ENCODE measurements at regions of chr2 and their contacts with region 1.

Region 1: DNA sequence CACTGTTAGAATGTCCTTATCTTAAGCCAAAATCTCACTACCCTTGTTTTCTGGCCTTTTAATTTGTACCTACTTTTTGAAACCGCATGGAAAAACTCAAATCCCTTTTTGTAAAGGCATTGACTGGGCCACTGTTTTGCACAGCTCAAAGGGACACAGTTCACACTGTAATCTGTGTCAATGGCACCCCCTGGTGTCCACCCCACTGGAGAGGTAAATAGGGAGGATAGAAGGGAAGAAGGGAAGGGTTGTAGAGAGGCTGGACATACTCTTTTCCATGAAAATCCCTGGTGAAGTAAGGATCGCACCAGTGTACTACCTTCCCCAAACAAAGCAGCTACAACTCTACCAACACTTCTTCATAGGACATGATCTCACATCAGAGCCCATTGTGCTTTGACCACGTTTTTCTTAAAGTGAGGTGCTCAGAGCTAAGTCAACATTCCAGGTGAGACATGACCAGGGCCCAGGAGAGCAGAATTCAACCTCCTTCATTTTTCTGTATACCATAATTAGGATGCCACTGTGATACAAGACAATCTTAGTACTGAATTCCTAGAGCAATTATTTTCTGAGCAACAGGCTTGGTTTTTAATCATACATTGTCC is 92.4 kb upstream of the RMDN2 start:
- DNase-seq: peak; percentile 86
- ATAC-seq: peak; percentile 67
- H3K4me3 ChIP-seq: no peak overlapping the region
- H3K27ac ChIP-seq: peak overlapping the region; percentile 39; the same call in 1 of the 2 replicates
- H3K4me1 ChIP-seq: peaks cover 34% of the 10 kb centered on the region
- H3K27me3 ChIP-seq: no peaks in the 10 kb centered on the region
- CTCF ChIP-seq: peak; percentile 88
- POLR2A ChIP-seq: no peak
- RAD21 ChIP-seq: peak; percentile 97

Region 2: GRCh38 chr2:37414470-37414949 is 418.2 kb before region 1 on chr2:
- CTCF ChIA-PET with region 1: interaction called, 20 read pairs
- POLR2A ChIA-PET with region 1: no interaction called
- dilution Hi-C with region 1: no loop called
- in situ Hi-C with region 1: loop called (anchors 5 kb)
- intact Hi-C with region 1: loop called (anchors 1 kb)
- DNase-seq: peak; percentile 81
- ATAC-seq: peak; percentile 84
- H3K4me3 ChIP-seq: no peak overlapping the region
- H3K27ac ChIP-seq: no peak overlapping the region
- H3K4me1 ChIP-seq: peaks cover 11% of the 10 kb centered on the region
- H3K27me3 ChIP-seq: no peaks in the 10 kb centered on the region
- CTCF ChIP-seq: peak; percentile 96
- POLR2A ChIP-seq: no peak
- RAD21 ChIP-seq: peak; percentile 97

Region 3: GRCh38 chr2:37570773-37571586 is 261.7 kb before region 1 on chr2:
- CTCF ChIA-PET with region 1: no interaction called
- POLR2A ChIA-PET with region 1: no interaction called
- dilution Hi-C with region 1: no loop called
- in situ Hi-C with region 1: no loop called
- intact Hi-C with region 1: loop called (anchors 5 kb)
- DNase-seq: peak; percentile 93
- ATAC-seq: peak; percentile 37
- H3K4me3 ChIP-seq: no peak overlapping the region
- H3K27ac ChIP-seq: peak overlapping the region; percentile 30
- H3K4me1 ChIP-seq: peaks cover 28% of the 10 kb centered on the region
- H3K27me3 ChIP-seq: no peaks in the 10 kb centered on the region
- CTCF ChIP-seq: no peak
- POLR2A ChIP-seq: no peak
- RAD21 ChIP-seq: 0 out of 2 replicates have a peak, but pooled peaks have one; percentile 13

Region 4: GRCh38 chr2:37672104-37672869 is 160.4 kb before region 1 on chr2:
- CTCF ChIA-PET with region 1: interaction called, 3 read pairs
- POLR2A ChIA-PET with region 1: interaction called, 17 read pairs
- dilution Hi-C with region 1: no loop called
- in situ Hi-C with region 1: loop called (anchors 5 kb)
- intact Hi-C with region 1: loop called (anchors 1 kb)
- DNase-seq: peak; percentile 88
- ATAC-seq: peak; percentile 53
- H3K4me3 ChIP-seq: peak overlapping the region; percentile 99
- H3K27ac ChIP-seq: peak overlapping the region; percentile 87
- H3K4me1 ChIP-seq: peaks cover 7% of the 10 kb centered on the region
- H3K27me3 ChIP-seq: no peaks in the 10 kb centered on the region
- CTCF ChIP-seq: no peak
- POLR2A ChIP-seq: no peak
- RAD21 ChIP-seq: no peak; the same call in 1 of the 2 replicates

Region 5: GRCh38 chr2:37753758-37754157 is 78.9 kb before region 1 on chr2:
- CTCF ChIA-PET with region 1: no interaction called
- POLR2A ChIA-PET with region 1: no interaction called
- dilution Hi-C with region 1: no loop called
- in situ Hi-C with region 1: no loop called
- intact Hi-C with region 1: no loop called
- DNase-seq: no peak
- ATAC-seq: no peak
- H3K4me3 ChIP-seq: no peak overlapping the region
- H3K27ac ChIP-seq: no peak overlapping the region
- H3K4me1 ChIP-seq: no peaks in the 10 kb centered on the region
- H3K27me3 ChIP-seq: no peaks in the 10 kb centered on the region
- CTCF ChIP-seq: no peak
- POLR2A ChIP-seq: no peak
- RAD21 ChIP-seq: no peak

Region 6: GRCh38 chr2:37767956-37768925 is 64.5 kb before region 1 on chr2:
- CTCF ChIA-PET with region 1: interaction called, 3 read pairs
- POLR2A ChIA-PET with region 1: no interaction called
- dilution Hi-C with region 1: no loop called
- in situ Hi-C with region 1: no loop called
- intact Hi-C with region 1: loop called (anchors 2 kb)
- DNase-seq: peak; percentile 92
- ATAC-seq: peak; percentile 86
- H3K4me3 ChIP-seq: no peak overlapping the region
- H3K27ac ChIP-seq: peak overlapping the region; percentile 97
- H3K4me1 ChIP-seq: peaks cover 37% of the 10 kb centered on the region
- H3K27me3 ChIP-seq: no peaks in the 10 kb centered on the region
- CTCF ChIP-seq: no peak
- POLR2A ChIP-seq: no peak
- RAD21 ChIP-seq: no peak

Region 7: GRCh38 chr2:37802899-37803379 is 29.8 kb before region 1 on chr2:
- CTCF ChIA-PET with region 1: no interaction called
- POLR2A ChIA-PET with region 1: no interaction called
- dilution Hi-C with region 1: no loop called
- in situ Hi-C with region 1: no loop called
- intact Hi-C with region 1: loop called (anchors 2 kb)
- DNase-seq: peak; percentile 99
- ATAC-seq: peak; percentile 93
- H3K4me3 ChIP-seq: no peak overlapping the region
- H3K27ac ChIP-seq: peak overlapping the region; percentile 100
- H3K4me1 ChIP-seq: peaks cover 29% of the 10 kb centered on the region
- H3K27me3 ChIP-seq: no peaks in the 10 kb centered on the region
- CTCF ChIP-seq: no peak
- POLR2A ChIP-seq: no peak
- RAD21 ChIP-seq: peak; percentile 28

Region 8: GRCh38 chr2:38248255-38248654 is 415.6 kb after region 1 on chr2:
- CTCF ChIA-PET with region 1: no interaction called
- POLR2A ChIA-PET with region 1: no interaction called
- dilution Hi-C with region 1: no loop called
- in situ Hi-C with region 1: no loop called
- intact Hi-C with region 1: no loop called
- DNase-seq: no peak
- ATAC-seq: no peak
- H3K4me3 ChIP-seq: no peak overlapping the region
- H3K27ac ChIP-seq: no peak overlapping the region
- H3K4me1 ChIP-seq: no peaks in the 10 kb centered on the region
- H3K27me3 ChIP-seq: peaks cover 32% of the 10 kb centered on the region
- CTCF ChIP-seq: no peak
- POLR2A ChIP-seq: no peak
- RAD21 ChIP-seq: no peak